ENCODE measurements at regions of chr15 and their contacts with region 1.

Region 1: DNA sequence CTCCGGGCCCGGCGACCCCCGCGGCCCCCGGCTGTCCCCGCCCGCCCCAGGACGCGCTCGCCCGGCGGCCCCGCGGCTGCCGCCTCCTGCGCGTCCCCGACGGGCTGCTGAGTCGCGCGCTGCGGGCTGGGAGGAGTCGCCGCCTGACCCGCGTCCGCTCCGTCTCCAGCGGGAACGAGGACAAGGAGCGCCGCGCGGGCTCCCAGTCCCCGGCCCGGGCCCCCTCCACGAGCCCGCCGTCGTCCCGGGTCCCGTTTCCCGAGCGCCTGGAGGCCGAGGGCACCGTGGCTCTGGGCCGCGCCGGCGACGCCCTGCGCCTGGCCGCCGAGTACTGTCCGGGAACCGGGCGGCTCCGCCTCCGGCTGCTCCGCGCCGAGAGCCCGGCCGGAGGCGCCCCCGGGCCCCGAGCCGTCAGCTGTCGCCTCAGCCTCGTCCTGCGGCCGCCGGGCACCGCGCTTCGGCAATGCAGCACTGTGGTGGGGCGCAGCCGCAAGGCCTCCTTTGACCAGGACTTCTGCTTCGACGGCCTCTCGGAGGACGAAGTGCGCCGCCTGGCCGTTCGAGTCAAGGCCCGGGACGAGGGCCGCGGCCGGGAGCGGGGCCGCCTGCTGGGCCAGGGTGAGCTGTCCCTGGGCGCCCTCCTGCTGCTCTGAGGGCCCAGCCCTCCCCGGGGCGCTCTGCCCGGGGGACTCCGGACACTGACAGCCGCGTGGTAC is 1.5 kb downstream of the C2CD4A start:
- DNase-seq: no peak
- H3K4me3 ChIP-seq: peak overlapping the region; percentile 53
- CTCF ChIP-seq: peak; percentile 20

Region 2: GRCh38 chr15:61871926-61872522 is 196.2 kb before region 1 on chr15:
- CTCF ChIA-PET with region 1: interaction called, 11 read pairs
- POLR2A ChIA-PET with region 1: no interaction called
- DNase-seq: no peak
- H3K4me3 ChIP-seq: no peak overlapping the region
- CTCF ChIP-seq: peak; percentile 28

Measured in AG04449 (cell line).